CD8-positive, alpha-beta T cell (primary cell): ENCODE measurements at regions of chr18 and their contacts with region 1.

Region 1: DNA sequence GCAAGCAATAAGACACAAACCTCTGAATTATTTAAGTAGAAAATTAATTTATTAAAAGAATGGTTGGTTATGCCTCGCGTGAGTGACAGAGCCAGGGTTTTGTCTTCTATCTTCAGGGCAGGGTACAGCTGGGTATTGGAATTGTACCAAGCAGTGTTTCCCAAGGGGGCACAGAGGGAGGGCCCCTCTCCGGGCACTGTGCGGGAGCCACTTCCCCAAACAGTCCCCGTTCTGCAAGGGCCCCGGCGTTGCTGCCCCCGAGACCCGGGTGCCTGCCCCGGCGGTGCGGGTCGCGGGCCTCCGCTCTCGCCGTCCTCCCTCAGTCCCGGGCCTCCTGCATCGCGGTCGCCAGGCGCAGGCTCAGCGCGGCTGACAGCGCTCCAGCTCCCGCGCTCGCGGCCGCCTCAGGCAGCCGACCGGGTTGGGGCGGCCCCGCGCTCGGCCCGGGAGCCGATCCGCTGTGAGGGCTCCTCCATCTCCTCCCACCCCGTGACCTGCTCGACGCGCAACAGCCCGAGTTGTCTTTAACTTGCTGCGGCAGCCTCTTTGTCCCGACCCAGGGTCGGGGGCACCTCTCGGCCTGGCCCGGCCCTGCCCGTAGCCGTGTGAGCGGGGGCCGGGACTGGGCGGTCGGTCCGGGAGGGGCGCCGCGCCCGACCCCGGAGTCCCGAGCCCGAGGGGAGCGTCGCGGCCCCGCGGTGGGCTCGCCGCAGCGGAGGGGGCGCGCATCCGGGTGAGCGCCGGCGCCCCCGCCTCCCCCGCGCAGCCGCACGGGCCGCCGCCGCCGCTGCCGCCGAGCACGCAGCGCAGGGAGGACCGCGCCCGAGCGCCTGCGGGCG is 620 bp upstream of the GALNT1 start:
- DNase-seq: peak; percentile 26 to 83 (median 59)
- ATAC-seq: peak; percentile 73
- H3K4me3 ChIP-seq: peak overlapping the region; percentile 53 to 65
- H3K4me3 Mint-ChIP-seq: peak overlapping the region; percentile 75
- H3K27ac ChIP-seq: peak overlapping the region; percentile 57 to 65
- H3K27ac Mint-ChIP-seq: peak overlapping the region; percentile 68
- H3K4me1 ChIP-seq: peaks cover 13% of the 10 kb centered on the region
- H3K4me1 Mint-ChIP-seq: peaks cover 27% of the 10 kb centered on the region
- H3K27me3 ChIP-seq: no peaks in the 10 kb centered on the region
- H3K27me3 Mint-ChIP-seq: peaks cover 14% of the 10 kb centered on the region
- CTCF ChIP-seq: no peak

Region 2: DNA sequence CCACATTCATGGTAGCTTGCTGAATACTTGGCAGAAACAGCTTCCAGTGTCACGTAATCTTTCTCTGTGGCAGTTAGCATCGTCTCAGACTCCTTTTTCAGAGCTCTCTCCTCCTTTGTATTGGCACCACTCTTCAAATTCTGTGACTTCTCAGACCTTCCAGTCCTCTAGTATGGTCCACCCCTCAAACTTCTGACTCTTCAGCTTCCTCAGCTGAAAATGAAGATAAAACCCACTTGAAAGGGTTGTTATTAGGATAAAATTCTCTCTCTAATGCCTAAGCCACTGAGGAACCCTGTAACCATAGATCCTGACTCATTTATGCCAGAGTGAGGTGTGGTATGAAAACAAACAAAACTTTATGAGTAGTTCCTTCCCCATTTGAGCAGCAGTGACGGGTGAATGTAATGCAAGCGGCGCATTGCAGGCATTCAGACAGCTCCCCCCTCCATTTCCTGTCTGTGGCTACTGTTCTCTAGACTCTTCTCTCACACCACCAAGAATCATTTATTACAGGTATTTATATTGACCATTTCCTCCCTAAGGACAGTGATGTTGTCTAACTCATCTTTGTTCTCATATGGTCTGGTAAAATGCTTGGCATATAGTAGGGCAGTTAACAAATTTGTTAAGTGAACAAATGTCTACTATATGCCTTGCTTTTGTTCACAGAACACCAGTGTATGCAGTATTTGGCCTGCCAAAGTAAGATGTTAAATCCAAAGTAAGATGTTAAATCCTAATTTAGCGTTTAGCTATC is 35.9 kb after region 1 on chr18:
- CTCF ChIA-PET with region 1: no interaction called
- POLR2A ChIA-PET with region 1: interaction called, 5 read pairs
- intact Hi-C with region 1: loop called (anchors 1 to 5 kb)
- DNase-seq: peak; percentile 10 to 82 (median 62)
- ATAC-seq: peak; percentile 92
- H3K4me3 ChIP-seq: peak overlapping the region in 1 of 2 experiments; percentile 10
- H3K4me3 Mint-ChIP-seq: no peak overlapping the region
- H3K27ac ChIP-seq: peak overlapping the region; percentile 27 to 76
- H3K27ac Mint-ChIP-seq: no peak overlapping the region
- H3K4me1 ChIP-seq: peaks cover 19% of the 10 kb centered on the region
- H3K4me1 Mint-ChIP-seq: peaks cover 20% of the 10 kb centered on the region
- H3K27me3 ChIP-seq: no peaks in the 10 kb centered on the region
- H3K27me3 Mint-ChIP-seq: no peaks in the 10 kb centered on the region
- CTCF ChIP-seq: no peak

Region 3: GRCh38 chr18:35688757-35689156 is 107.8 kb after region 1 on chr18:
- CTCF ChIA-PET with region 1: no interaction called
- POLR2A ChIA-PET with region 1: no interaction called
- intact Hi-C with region 1: loop called in 1 of 2 experiments (anchors 10 kb)
- DNase-seq: no peak
- ATAC-seq: no peak
- H3K4me3 ChIP-seq: no peak overlapping the region
- H3K4me3 Mint-ChIP-seq: no peak overlapping the region
- H3K27ac ChIP-seq: no peak overlapping the region
- H3K27ac Mint-ChIP-seq: no peak overlapping the region
- H3K4me1 ChIP-seq: no peaks in the 10 kb centered on the region
- H3K4me1 Mint-ChIP-seq: no peaks in the 10 kb centered on the region
- H3K27me3 ChIP-seq: no peaks in the 10 kb centered on the region
- H3K27me3 Mint-ChIP-seq: no peaks in the 10 kb centered on the region
- CTCF ChIP-seq: no peak

Region 4: DNA sequence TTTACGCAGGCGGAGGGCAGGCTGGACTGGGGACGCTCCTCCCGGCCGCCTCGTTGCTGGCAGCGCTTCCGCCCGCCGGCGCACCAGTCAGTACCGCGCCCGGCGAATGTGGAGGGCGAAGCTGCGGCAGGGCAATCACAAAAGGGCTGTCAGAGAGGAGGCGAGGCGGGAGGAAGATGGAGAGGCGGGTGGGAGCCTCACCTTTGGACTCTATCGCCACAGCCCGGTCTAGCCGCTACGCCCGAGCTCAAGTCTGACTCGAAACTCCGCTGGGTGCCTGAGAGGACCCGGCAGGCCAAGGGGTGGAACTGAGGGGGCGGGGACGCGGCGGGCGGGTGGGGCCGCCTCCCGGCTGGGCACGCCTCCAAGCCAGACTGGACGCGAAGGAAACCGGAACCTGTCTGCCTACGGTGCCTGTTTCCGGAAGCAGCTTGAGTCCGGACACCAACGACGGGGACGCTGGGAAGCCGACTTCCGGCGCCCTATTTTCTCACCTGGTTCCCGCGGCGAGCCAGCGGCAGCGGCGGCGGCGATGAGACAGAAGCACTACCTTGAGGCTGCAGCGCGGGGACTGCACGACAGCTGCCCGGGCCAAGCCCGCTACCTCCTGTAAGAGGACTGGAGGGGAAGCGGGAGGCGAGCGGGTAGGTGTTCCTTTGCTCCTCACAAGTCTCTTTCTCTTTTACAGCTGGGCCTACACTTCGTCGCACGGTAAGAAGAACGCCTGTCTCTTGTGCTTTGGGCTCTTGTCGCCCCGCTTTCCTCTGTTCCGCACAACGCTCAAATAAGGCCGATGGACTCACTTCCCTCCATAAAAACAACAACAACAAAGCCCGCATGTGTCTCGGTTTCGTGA is 391.5 kb after region 1 on chr18 and contains the start of gene RMP24:
- CTCF ChIA-PET with region 1: no interaction called
- POLR2A ChIA-PET with region 1: interaction called, 3 read pairs
- intact Hi-C with region 1: loop called (anchors 1 to 5 kb)
- DNase-seq: peak; percentile 88 to 97 (median 93)
- ATAC-seq: peak; percentile 84
- H3K4me3 ChIP-seq: peak within 1 kb of the TSS; percentile 60 to 89
- H3K4me3 Mint-ChIP-seq: peak within 1 kb of the TSS; percentile 94
- H3K27ac ChIP-seq: peak within 1 kb of the TSS; percentile 57 to 90
- H3K27ac Mint-ChIP-seq: peak within 1 kb of the TSS; percentile 98
- H3K4me1 ChIP-seq: peaks cover 35% of the 10 kb centered on the region
- H3K4me1 Mint-ChIP-seq: peaks cover 65% of the 10 kb centered on the region
- H3K27me3 ChIP-seq: no peaks in the 10 kb centered on the region
- H3K27me3 Mint-ChIP-seq: no peaks in the 10 kb centered on the region
- CTCF ChIP-seq: no peak

Region 5: GRCh38 chr18:36067055-36067957 is 486.4 kb after region 1 on chr18 and contains the start of gene RPRD1A:
- CTCF ChIA-PET with region 1: no interaction called
- POLR2A ChIA-PET with region 1: no interaction called
- intact Hi-C with region 1: loop called (anchors 5 to 10 kb)
- DNase-seq: peak; percentile 92 to 99 (median 97)
- ATAC-seq: peak; percentile 93
- H3K4me3 ChIP-seq: peak within 1 kb of the TSS; percentile 95 to 98
- H3K4me3 Mint-ChIP-seq: peak within 1 kb of the TSS; percentile 94
- H3K27ac ChIP-seq: peak within 1 kb of the TSS; percentile 88 to 89
- H3K27ac Mint-ChIP-seq: peak within 1 kb of the TSS; percentile 96
- H3K4me1 ChIP-seq: peaks cover 29% of the 10 kb centered on the region
- H3K4me1 Mint-ChIP-seq: peaks cover 46% of the 10 kb centered on the region
- H3K27me3 ChIP-seq: no peaks in the 10 kb centered on the region
- H3K27me3 Mint-ChIP-seq: peaks cover 3% of the 10 kb centered on the region
- CTCF ChIP-seq: no peak
- total RNA-seq, gene RPRD1A: 13.8 to 15.8 TPM

Region 6: GRCh38 chr18:36129300-36130038 is 548.5 kb after region 1 on chr18 and contains the starts of genes ELP2 and SLC39A6:
- CTCF ChIA-PET with region 1: no interaction called
- POLR2A ChIA-PET with region 1: no interaction called
- intact Hi-C with region 1: loop called (anchors 1 to 10 kb)
- DNase-seq: peak; percentile 88 to 98 (median 96)
- ATAC-seq: peak; percentile 87
- H3K4me3 ChIP-seq: peak within 1 kb of the TSS; percentile 97 to 100
- H3K4me3 Mint-ChIP-seq: peak within 1 kb of the TSS; percentile 95
- H3K27ac ChIP-seq: peak within 1 kb of the TSS; percentile 94 to 98
- H3K27ac Mint-ChIP-seq: peak within 1 kb of the TSS; percentile 98
- H3K4me1 ChIP-seq: peaks cover 47% of the 10 kb centered on the region
- H3K4me1 Mint-ChIP-seq: peaks cover 68% of the 10 kb centered on the region
- H3K27me3 ChIP-seq: no peaks in the 10 kb centered on the region
- H3K27me3 Mint-ChIP-seq: no peaks in the 10 kb centered on the region
- CTCF ChIP-seq: no peak
- total RNA-seq, gene ELP2: 212 to 222 TPM
- total RNA-seq, gene SLC39A6: 12.3 to 14.4 TPM